Right ventricle myocardium superior (tissue), 1 donor: ENCODE measurements at regions of chr21 and their contacts with region 1.

Region 1: GRCh38 chr21:34073032-34073869 is at the starts of genes MRPS6 and SLC5A3:
- DNase-seq: peak; percentile 91
- ATAC-seq: peak; percentile 89
- total RNA-seq, gene MRPS6: 74.4 TPM
- total RNA-seq, gene SLC5A3: 5.1 TPM

Region 2: GRCh38 chr21:33924079-33924765 is 149.0 kb before region 1 on chr21:
- intact Hi-C with region 1: loop called (anchors 5 kb)
- DNase-seq: peak; percentile 92
- ATAC-seq: peak; percentile 98

Region 3: GRCh38 chr21:34202553-34203372 is 129.5 kb after region 1 on chr21:
- intact Hi-C with region 1: loop called (anchors 5 kb)
- DNase-seq: peak; percentile 64
- ATAC-seq: no peak